ENCODE measurements at regions of chr1 and their contacts with region 1.

Region 1: GRCh38 chr1:40951943-40952743 is 27.4 kb upstream of the CTPS1 start:
- DNase-seq: peak; percentile 84
- ATAC-seq: peak; percentile 77

Region 2: DNA sequence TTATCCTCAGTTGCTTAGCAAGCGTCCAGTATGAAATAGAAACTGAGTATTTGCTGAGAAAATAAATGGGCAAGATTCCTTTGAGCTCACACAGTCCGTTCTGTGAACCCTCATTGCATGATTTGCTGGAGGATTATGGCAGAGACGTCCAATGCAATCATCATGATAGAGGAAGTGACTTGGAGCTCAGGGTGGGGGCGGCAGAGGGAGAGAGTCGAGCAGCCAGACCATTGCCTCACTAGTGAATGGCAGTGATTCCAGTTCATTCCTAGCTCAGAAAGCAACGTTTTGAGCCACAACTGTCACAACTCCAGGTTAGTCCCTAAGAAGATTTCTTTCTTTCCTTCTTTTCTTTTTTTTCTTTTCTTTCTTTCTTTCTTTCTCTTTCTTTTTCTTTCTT is 607.5 kb before region 1 on chr1:
- intact Hi-C with region 1: no loop called
- DNase-seq: peak; percentile 77
- ATAC-seq: peak; percentile 54

Region 3: DNA sequence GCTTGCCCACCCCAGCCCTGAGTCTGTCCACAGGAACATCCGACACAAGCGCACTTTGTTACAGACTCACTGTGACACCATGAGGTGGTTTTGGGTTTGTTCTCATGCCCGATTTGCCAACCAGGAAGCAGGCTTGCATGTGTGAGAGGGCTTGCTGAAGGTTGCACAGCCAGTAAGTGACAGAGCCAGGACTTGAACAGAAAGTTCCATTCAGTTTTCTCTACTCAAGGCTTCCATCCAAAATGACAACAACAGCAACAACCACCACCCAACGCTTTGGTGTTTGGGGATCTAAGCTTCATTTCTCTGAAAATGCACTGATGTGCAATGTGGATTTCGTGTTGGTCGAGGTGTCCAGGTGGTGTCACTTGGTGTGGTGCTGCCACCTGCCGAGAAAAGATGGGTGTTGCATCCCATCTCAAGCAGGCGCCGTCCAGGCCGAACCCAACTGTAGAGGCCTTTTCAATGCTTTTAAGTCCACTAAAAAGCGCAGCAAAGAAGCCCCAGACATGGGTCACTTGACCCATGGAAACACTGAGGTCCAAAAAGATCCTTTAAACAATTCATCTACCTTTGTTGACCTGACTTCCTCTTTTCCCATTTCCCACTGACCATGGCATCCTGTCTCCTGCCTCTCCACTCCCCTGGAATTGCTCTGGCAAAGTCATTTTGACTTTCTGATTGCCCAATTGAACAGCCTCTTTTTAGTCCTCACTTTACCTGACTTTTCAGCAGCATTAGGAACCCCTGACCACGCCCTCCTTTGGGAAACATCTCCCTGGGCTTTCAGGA is 102.1 kb before region 1 on chr1:
- intact Hi-C with region 1: loop called (anchors 1 kb)
- DNase-seq: peak; percentile 86
- ATAC-seq: peak; percentile 77

Region 4: GRCh38 chr1:40979233-40980067 is 27.3 kb after region 1 on chr1 and contains the start of gene CTPS1:
- intact Hi-C with region 1: no loop called
- DNase-seq: peak; percentile 97
- ATAC-seq: peak; percentile 97
- total RNA-seq, gene CTPS1: 7.2 TPM

Region 5: GRCh38 chr1:41213341-41213740 is 261.2 kb after region 1 on chr1:
- intact Hi-C with region 1: no loop called
- DNase-seq: no peak
- ATAC-seq: no peak

Measured in Right ventricle myocardium inferior (tissue), 1 donor.